Naive thymus-derived CD4-positive, alpha-beta T cell (primary cell): ENCODE measurements at regions of chr1 and their contacts with region 1.

Region 1: GRCh38 chr1:64886877-64887276 is 79.5 kb downstream of the JAK1 start:
- DNase-seq: no peak
- ATAC-seq: no peak
- H3K4me3 ChIP-seq: no peak overlapping the region
- H3K4me3 Mint-ChIP-seq: peak overlapping the region in 4 of 10 donors; percentile 13 to 43 (median 35)
- H3K27ac ChIP-seq: no peak overlapping the region
- H3K27ac Mint-ChIP-seq: peak overlapping the region in 8 of 9 donors; percentile 14 to 74 (median 38)
- H3K4me1 ChIP-seq: peaks cover 45 to 55% of the 10 kb centered on the region in 2 donors
- H3K4me1 Mint-ChIP-seq: peaks cover 56 to 95% (median 86%) of the 10 kb centered on the region in 7 donors
- H3K27me3 ChIP-seq: no peaks in the 10 kb centered on the region
- H3K27me3 Mint-ChIP-seq: no peaks in the 10 kb centered on the region

Region 2: GRCh38 chr1:64900916-64901315 is 14.0 kb after region 1 on chr1:
- CTCF ChIA-PET with region 1: no interaction called
- POLR2A ChIA-PET with region 1: interaction called, 3 read pairs
- intact Hi-C with region 1: loop called in 1 of 2 experiments (anchors 2 kb)
- DNase-seq: no peak
- ATAC-seq: no peak
- H3K4me3 ChIP-seq: no peak overlapping the region
- H3K4me3 Mint-ChIP-seq: peak overlapping the region in 8 of 10 donors; percentile 5 to 54 (median 32)
- H3K27ac ChIP-seq: no peak overlapping the region
- H3K27ac Mint-ChIP-seq: peak overlapping the region in 4 of 9 donors; percentile 16 to 63 (median 50)
- H3K4me1 ChIP-seq: peaks cover 36 to 69% of the 10 kb centered on the region in 2 donors
- H3K4me1 Mint-ChIP-seq: peaks cover 45 to 100% (median 97%) of the 10 kb centered on the region in 7 donors
- H3K27me3 ChIP-seq: no peaks in the 10 kb centered on the region
- H3K27me3 Mint-ChIP-seq: no peaks in the 10 kb centered on the region